ENCODE measurements at regions of chr7 and their contacts with region 1.

Region 1: DNA sequence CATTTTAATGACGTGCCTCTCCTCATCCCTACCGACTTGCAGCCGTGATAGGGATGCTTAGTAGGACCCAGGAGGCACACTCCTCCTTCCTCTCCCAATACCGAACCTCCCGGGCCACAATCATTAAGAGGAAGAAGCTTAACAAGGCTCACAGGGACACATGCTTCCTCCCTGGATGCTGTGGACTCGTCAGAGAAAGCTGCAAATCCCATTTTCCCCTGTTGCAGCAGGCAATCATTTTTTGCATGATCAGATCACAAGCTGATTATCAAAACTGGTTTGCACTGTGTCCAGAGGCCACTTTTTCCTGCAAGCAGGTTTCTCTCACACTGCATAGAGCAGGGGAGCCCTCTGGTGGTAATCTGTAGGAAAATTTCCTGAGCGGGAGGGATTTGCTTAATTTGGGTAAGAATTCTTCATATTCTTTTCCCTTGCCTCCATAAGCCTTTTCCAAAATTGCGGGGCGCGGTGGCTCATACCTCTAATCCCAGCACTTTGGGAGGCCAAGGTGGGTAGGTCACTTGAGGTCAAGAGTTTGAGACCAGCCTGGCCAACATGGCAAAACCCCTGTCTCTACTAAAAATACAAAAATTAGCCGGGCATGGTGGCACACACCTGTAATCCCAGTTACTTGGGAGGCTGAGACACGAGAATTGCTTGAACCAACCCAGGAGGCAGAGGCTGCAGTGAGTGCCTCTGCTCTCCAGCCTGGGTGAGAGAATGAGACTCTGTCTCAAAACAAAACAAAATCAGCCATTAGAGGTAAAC is 16.1 kb upstream of the LAMB4 start:
- DNase-seq: peak; percentile 60
- H3K4me3 ChIP-seq: no peak overlapping the region
- H3K27ac ChIP-seq: no peak overlapping the region
- H3K4me1 ChIP-seq: no peaks in the 10 kb centered on the region
- CTCF ChIP-seq: peak; percentile 85

Region 2: DNA sequence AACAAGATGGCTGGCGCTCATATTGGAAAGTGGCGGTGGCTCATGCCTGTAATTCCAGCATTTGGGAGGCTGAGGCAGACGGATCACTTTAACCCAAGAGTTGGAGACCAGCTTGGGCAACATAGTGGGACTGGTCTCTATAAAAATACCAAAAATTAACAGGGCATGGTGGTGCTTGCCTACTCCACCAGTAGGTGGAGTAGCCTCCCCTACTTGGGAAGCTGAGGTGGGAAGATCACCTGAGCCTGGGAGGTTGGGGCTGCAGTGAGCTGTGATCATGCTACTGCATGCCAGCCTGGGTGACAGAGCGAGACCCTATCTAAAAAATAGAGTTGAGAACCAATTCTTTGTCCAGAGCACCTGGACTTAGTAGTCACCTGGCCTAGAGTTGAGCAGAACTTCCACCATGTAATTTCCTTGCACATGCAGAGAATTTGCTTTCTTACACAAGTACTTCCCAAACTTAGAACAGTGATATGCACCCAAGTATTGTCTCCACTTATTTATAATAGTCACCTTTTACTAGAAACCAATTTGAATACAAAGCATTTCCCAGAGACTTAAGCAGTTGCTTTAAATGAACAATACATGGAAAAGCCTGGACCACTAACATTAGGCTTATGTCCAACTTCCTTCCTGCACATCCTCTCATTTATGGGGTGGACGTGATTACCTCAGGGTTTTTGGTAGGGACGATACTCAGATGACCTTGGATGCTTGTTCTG is 32.0 kb before region 1 on chr7:
- CTCF ChIA-PET with region 1: no interaction called
- POLR2A ChIA-PET with region 1: interaction called, 3 read pairs
- intact Hi-C with region 1: loop called (anchors 5 kb)
- DNase-seq: peak; percentile 24
- H3K4me3 ChIP-seq: no peak overlapping the region
- H3K27ac ChIP-seq: no peak overlapping the region
- H3K4me1 ChIP-seq: no peaks in the 10 kb centered on the region
- CTCF ChIP-seq: peak; percentile 75

Region 3: DNA sequence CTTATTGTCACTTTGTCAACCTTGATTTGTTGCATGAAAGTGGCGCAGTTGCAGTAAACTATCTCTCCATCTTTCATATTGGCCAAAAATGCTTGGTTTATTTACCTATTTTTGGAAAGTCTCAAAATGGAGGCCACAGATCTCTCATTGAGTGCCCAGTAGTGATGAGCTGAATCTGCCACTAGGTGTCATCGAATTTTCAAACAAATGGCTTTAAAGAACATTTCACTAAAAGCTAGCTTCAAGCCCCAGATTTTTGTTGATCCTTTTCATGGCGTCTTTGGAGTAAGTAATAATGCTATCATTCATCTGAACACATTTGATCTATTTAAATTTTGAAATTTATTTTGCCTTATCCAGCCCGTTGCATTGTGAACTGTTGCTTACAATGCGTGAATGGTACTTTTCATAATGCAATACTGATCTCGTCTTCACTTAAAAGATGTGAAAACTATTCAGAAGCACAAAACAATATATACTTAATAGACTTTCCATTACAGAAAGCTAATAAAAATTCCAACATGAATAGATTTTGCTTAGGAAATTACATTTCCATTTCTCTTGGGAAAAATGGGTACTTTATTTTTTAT is 659.6 kb after region 1 on chr7:
- CTCF ChIA-PET with region 1: no interaction called
- POLR2A ChIA-PET with region 1: no interaction called
- intact Hi-C with region 1: no loop called
- DNase-seq: peak; percentile 12
- H3K4me3 ChIP-seq: no peak overlapping the region
- H3K27ac ChIP-seq: no peak overlapping the region
- H3K4me1 ChIP-seq: no peaks in the 10 kb centered on the region
- CTCF ChIP-seq: peak; percentile 78

Measured in OCI-LY7 (cell line).